ENCODE measurements at regions of chr9 and their contacts with region 1.

Region 1: GRCh38 chr9:106753155-106753671 is 109.8 kb upstream of the ZNF462 start:
- DNase-seq: peak; percentile 97
- ATAC-seq: peak; percentile 97
- H3K4me3 ChIP-seq: no peak overlapping the region
- H3K27ac ChIP-seq: peak overlapping the region; percentile 47
- H3K4me1 ChIP-seq: peaks cover 15% of the 10 kb centered on the region
- H3K27me3 ChIP-seq: no peaks in the 10 kb centered on the region
- CTCF ChIP-seq: no peak
- EP300 ChIP-seq: peak; percentile 95 to 96; a peak in 3 of 4 replicates
- POLR2A ChIP-seq: no peak
- RAD21 ChIP-seq: no peak

Region 2: DNA sequence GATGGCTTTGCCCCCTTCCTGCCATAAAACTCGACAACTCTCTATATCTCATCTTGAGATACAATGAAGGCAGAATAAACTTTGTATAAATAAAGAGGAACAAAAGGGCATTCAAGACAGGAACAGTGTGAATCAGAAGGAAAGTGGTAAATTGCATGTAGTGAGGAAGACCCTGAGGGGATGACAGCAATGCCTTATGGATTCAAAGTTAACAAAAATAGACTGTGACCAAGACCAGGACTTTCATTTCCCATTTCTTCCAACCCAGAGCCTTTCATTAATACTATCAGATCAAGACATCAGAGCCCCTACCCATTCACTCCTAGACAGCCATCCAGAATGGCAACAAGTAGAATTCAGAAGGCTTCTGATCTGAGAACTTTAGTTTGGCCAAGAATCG is 63.3 kb after region 1 on chr9:
- CTCF ChIA-PET with region 1: no interaction called
- POLR2A ChIA-PET with region 1: no interaction called
- RAD21 ChIA-PET with region 1: interaction called, 4 read pairs
- SMC1A ChIA-PET with region 1: interaction called, 4 read pairs
- in situ Hi-C with region 1: no loop called
- intact Hi-C with region 1: loop called (anchors 1 kb)
- DNase-seq: peak; percentile 16
- ATAC-seq: peak; percentile 85
- H3K4me3 ChIP-seq: no peak overlapping the region
- H3K27ac ChIP-seq: no peak overlapping the region
- H3K4me1 ChIP-seq: no peaks in the 10 kb centered on the region
- H3K27me3 ChIP-seq: no peaks in the 10 kb centered on the region
- CTCF ChIP-seq: no peak
- EP300 ChIP-seq: peak in 1 of 2 experiments; percentile 75; a peak in 1 of 4 replicates
- POLR2A ChIP-seq: no peak
- RAD21 ChIP-seq: no peak

Region 3: DNA sequence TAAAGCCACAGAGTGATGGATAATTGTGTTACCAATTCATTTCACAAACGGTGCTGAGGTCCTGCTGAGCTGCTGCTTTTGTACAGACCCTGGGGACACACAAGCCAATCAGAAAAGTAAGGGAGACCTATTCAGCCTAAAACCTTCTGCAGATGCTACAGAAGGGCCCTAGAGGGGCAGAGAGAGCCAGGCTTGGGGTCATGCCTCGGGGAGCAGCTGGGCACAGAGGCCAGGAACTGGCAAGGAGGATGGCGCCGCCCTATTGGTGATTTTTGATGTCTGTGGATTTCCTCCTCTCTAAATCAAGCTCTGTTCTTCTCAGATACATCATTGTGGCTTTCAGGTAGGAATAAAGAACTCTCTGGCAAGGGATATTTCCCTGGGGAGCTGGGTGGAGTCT is 291.7 kb after region 1 on chr9:
- CTCF ChIA-PET with region 1: no interaction called
- POLR2A ChIA-PET with region 1: no interaction called
- RAD21 ChIA-PET with region 1: no interaction called
- SMC1A ChIA-PET with region 1: no interaction called
- in situ Hi-C with region 1: no loop called
- intact Hi-C with region 1: loop called (anchors 5 kb)
- DNase-seq: no peak
- ATAC-seq: peak; percentile 8; the same call in 1 of the 3 replicates
- H3K4me3 ChIP-seq: no peak overlapping the region
- H3K27ac ChIP-seq: no peak overlapping the region
- H3K4me1 ChIP-seq: peaks cover 15% of the 10 kb centered on the region
- H3K27me3 ChIP-seq: no peaks in the 10 kb centered on the region
- CTCF ChIP-seq: peak; percentile 4 to 27 (median 8); a peak in 1 of 6 replicates
- EP300 ChIP-seq: no peak
- POLR2A ChIP-seq: no peak
- RAD21 ChIP-seq: no peak

Region 4: GRCh38 chr9:107299437-107299836 is 546.2 kb after region 1 on chr9:
- CTCF ChIA-PET with region 1: no interaction called
- POLR2A ChIA-PET with region 1: no interaction called
- RAD21 ChIA-PET with region 1: no interaction called
- SMC1A ChIA-PET with region 1: no interaction called
- in situ Hi-C with region 1: no loop called
- intact Hi-C with region 1: no loop called
- DNase-seq: no peak
- ATAC-seq: peak; percentile 20; the same call in 2 of the 3 replicates
- H3K4me3 ChIP-seq: no peak overlapping the region
- H3K27ac ChIP-seq: no peak overlapping the region
- H3K4me1 ChIP-seq: 0 out of 2 replicates have a peak, but pooled peaks cover 1% of the 10 kb centered on the region
- H3K27me3 ChIP-seq: no peaks in the 10 kb centered on the region
- CTCF ChIP-seq: no peak
- EP300 ChIP-seq: no peak
- POLR2A ChIP-seq: no peak
- RAD21 ChIP-seq: no peak